CD4-positive, alpha-beta memory T cell (primary cell): ENCODE measurements at regions of chr10 and their contacts with region 1.

Region 1: GRCh38 chr10:72337020-72337629 is 17.6 kb downstream of the DNAJB12 start:
- DNase-seq: peak in 4 of 5 donors; percentile 44 to 68 (median 50)
- H3K4me3 ChIP-seq: no peak overlapping the region
- H3K4me3 Mint-ChIP-seq: peak overlapping the region in 2 of 8 donors; percentile 17 to 43
- H3K27ac ChIP-seq: peak overlapping the region; percentile 76
- H3K27ac Mint-ChIP-seq: peak overlapping the region; percentile 82 to 98 (median 95)
- H3K4me1 ChIP-seq: peaks cover 62% of the 10 kb centered on the region
- H3K4me1 Mint-ChIP-seq: peaks cover 31 to 69% (median 55%) of the 10 kb centered on the region in 4 donors
- H3K27me3 ChIP-seq: no peaks in the 10 kb centered on the region
- H3K27me3 Mint-ChIP-seq: no peaks in the 10 kb centered on the region

Region 2: DNA sequence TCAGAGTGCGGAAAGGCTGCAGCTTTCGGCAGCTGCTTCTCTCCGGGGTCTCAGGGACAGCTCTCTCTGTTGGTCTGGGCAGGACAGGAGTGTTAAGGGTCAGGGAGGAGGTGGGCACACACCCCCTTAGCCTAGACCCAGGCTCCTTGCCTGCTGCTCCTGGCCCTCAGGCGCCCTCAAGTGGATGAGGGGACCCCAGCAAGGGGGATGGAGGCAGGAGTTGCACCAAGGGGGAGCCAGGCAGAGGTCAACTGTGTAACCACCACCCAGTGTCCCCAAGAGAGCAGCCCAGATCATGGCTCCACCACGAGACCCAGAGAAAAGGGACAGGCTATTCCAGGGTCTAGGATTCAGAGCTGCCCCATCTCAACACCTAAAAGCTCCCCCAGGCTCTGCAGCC is 275.6 kb before region 1 on chr10:
- CTCF ChIA-PET with region 1: interaction called, 18 read pairs
- POLR2A ChIA-PET with region 1: interaction called, 4 read pairs
- intact Hi-C with region 1: no loop called
- DNase-seq: no peak
- H3K4me3 ChIP-seq: no peak overlapping the region
- H3K4me3 Mint-ChIP-seq: peak overlapping the region in 3 of 8 donors; percentile 34 to 71 (median 36)
- H3K27ac ChIP-seq: no peak overlapping the region
- H3K27ac Mint-ChIP-seq: peak overlapping the region in 6 of 7 donors; percentile 68 to 92 (median 83)
- H3K4me1 ChIP-seq: peaks cover 5% of the 10 kb centered on the region
- H3K4me1 Mint-ChIP-seq: peaks cover 17 to 49% (median 23%) of the 10 kb centered on the region in 4 donors
- H3K27me3 ChIP-seq: no peaks in the 10 kb centered on the region
- H3K27me3 Mint-ChIP-seq: no peaks in the 10 kb centered on the region

Region 3: GRCh38 chr10:72126184-72126871 is 210.8 kb before region 1 on chr10:
- CTCF ChIA-PET with region 1: interaction called, 196 read pairs
- POLR2A ChIA-PET with region 1: interaction called, 13 read pairs
- intact Hi-C with region 1: loop called (anchors 1 kb)
- DNase-seq: peak in 3 of 5 donors; percentile 16 to 28 (median 25)
- H3K4me3 ChIP-seq: no peak overlapping the region
- H3K4me3 Mint-ChIP-seq: no peak overlapping the region
- H3K27ac ChIP-seq: no peak overlapping the region
- H3K27ac Mint-ChIP-seq: peak overlapping the region in 5 of 7 donors; percentile 25 to 87 (median 38)
- H3K4me1 ChIP-seq: peaks cover 29% of the 10 kb centered on the region
- H3K4me1 Mint-ChIP-seq: peaks cover 24 to 34% (median 26%) of the 10 kb centered on the region in 4 donors
- H3K27me3 ChIP-seq: no peaks in the 10 kb centered on the region
- H3K27me3 Mint-ChIP-seq: no peaks in the 10 kb centered on the region

Region 4: GRCh38 chr10:72229261-72230251 is 107.6 kb before region 1 on chr10:
- CTCF ChIA-PET with region 1: interaction called, 89 read pairs
- POLR2A ChIA-PET with region 1: interaction called, 3 read pairs
- intact Hi-C with region 1: no loop called
- DNase-seq: no peak
- H3K4me3 ChIP-seq: no peak overlapping the region
- H3K4me3 Mint-ChIP-seq: peak overlapping the region in 2 of 8 donors; percentile 20 to 42
- H3K27ac ChIP-seq: no peak overlapping the region
- H3K27ac Mint-ChIP-seq: peak overlapping the region; percentile 3 to 89 (median 68)
- H3K4me1 ChIP-seq: peaks cover 35% of the 10 kb centered on the region
- H3K4me1 Mint-ChIP-seq: peaks cover 26 to 43% (median 35%) of the 10 kb centered on the region in 4 donors
- H3K27me3 ChIP-seq: no peaks in the 10 kb centered on the region
- H3K27me3 Mint-ChIP-seq: no peaks in the 10 kb centered on the region

Region 5: DNA sequence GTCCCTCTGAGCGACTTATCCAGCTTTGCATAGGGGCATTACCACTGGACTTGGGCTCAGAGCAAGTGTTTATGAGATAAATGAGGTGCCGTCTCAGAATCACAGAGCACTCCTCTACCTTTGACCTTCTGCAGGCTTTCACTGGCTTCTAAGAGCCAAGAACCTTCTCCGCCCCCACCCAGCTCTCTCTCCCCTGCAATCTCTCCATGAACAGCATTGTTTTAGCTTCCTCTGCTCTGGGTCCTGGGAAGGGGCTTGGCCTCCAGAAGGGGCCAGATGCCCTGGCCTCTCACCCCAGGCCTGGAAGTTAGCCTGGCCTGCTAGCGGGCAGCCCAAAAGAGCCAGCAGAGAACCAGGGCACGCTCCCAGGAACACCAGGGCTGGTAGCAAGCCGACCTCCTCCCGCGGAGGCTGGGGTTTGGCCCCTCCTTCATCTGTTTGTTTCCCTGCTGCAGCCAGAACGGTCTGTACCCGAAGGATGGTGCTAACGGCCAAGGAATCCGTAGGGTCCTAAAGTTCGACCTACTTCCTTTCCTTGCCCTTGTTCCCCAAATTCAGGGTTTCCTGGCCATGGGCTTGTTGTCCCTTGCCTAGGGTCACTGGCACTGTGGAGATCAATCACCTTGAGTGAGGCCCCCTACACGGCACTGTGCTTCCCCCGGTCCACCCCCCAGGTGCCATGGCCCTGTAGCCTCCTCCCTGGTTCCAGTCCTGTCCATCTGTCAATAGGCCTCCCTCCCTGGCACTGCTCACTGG is 82.1 kb before region 1 on chr10:
- CTCF ChIA-PET with region 1: interaction called, 11 read pairs
- POLR2A ChIA-PET with region 1: interaction called, 14 read pairs
- intact Hi-C with region 1: no loop called
- DNase-seq: peak in 3 of 5 donors; percentile 12 to 27 (median 26)
- H3K4me3 ChIP-seq: peak overlapping the region in 1 of 2 donors; percentile 13
- H3K4me3 Mint-ChIP-seq: peak overlapping the region; percentile 59 to 89 (median 70)
- H3K27ac ChIP-seq: peak overlapping the region; percentile 46
- H3K27ac Mint-ChIP-seq: peak overlapping the region; percentile 69 to 91 (median 86)
- H3K4me1 ChIP-seq: peaks cover 91% of the 10 kb centered on the region
- H3K4me1 Mint-ChIP-seq: peaks cover 50 to 88% (median 69%) of the 10 kb centered on the region in 4 donors
- H3K27me3 ChIP-seq: no peaks in the 10 kb centered on the region
- H3K27me3 Mint-ChIP-seq: no peaks in the 10 kb centered on the region

Region 6: GRCh38 chr10:72349438-72349837 is 12.3 kb after region 1 on chr10:
- CTCF ChIA-PET with region 1: interaction called, 10 read pairs
- POLR2A ChIA-PET with region 1: interaction called, 8 read pairs
- intact Hi-C with region 1: no loop called
- DNase-seq: no peak
- H3K4me3 ChIP-seq: no peak overlapping the region
- H3K4me3 Mint-ChIP-seq: peak overlapping the region in 3 of 8 donors; percentile 33 to 69 (median 46)
- H3K27ac ChIP-seq: no peak overlapping the region
- H3K27ac Mint-ChIP-seq: peak overlapping the region in 2 of 7 donors; percentile 42 to 71
- H3K4me1 ChIP-seq: peaks cover 36% of the 10 kb centered on the region
- H3K4me1 Mint-ChIP-seq: peaks cover 26 to 68% (median 40%) of the 10 kb centered on the region in 4 donors
- H3K27me3 ChIP-seq: no peaks in the 10 kb centered on the region
- H3K27me3 Mint-ChIP-seq: no peaks in the 10 kb centered on the region